ENCODE measurements at regions of chr9 and their contacts with region 1.

Region 1: GRCh38 chr9:69798744-69799143 is 21.9 kb upstream of the CFAP95 start:
- H3K4me3 ChIP-seq: no peak overlapping the region
- H3K27ac ChIP-seq: no peak overlapping the region
- H3K4me1 ChIP-seq: no peaks in the 10 kb centered on the region
- CTCF ChIP-seq: no peak

Region 2: GRCh38 chr9:69731348-69731747 is 67.4 kb before region 1 on chr9:
- CTCF ChIA-PET with region 1: no interaction called
- POLR2A ChIA-PET with region 1: no interaction called
- H3K4me3 ChIP-seq: no peak overlapping the region
- H3K27ac ChIP-seq: no peak overlapping the region
- H3K4me1 ChIP-seq: no peaks in the 10 kb centered on the region
- CTCF ChIP-seq: no peak

Region 3: DNA sequence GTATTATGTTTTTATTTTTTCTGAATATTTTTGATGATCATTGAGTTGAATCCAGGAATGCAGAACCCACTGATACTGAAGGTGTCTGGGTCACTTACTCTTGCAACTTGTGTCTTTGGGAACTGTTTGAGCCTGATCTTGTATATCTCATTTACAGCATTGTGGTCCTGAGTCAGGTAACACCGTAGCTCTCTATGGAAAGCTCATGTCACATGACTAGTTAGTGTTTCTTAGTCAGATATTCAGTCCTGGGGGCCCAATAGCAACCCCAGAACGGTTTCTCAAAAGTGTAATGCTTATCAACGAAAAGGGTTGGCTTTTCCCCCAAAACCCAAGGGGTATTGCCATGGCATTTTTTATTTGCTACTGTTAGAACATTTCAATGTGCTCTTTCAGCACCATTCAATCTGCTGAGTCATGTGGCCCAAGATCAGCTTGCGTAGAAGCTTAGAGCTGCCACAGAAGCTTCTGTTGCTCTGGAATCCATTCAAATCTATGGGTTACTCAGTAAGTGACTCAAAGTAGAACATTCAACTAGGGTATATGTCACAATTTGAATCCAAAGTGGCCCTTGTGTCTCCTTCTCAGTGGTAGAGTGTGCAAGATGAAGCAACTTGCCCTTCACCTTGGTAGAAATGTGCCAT is 26.8 kb before region 1 on chr9:
- CTCF ChIA-PET with region 1: no interaction called
- POLR2A ChIA-PET with region 1: no interaction called
- H3K4me3 ChIP-seq: no peak overlapping the region
- H3K27ac ChIP-seq: no peak overlapping the region
- H3K4me1 ChIP-seq: no peaks in the 10 kb centered on the region
- CTCF ChIP-seq: no peak

Region 4: DNA sequence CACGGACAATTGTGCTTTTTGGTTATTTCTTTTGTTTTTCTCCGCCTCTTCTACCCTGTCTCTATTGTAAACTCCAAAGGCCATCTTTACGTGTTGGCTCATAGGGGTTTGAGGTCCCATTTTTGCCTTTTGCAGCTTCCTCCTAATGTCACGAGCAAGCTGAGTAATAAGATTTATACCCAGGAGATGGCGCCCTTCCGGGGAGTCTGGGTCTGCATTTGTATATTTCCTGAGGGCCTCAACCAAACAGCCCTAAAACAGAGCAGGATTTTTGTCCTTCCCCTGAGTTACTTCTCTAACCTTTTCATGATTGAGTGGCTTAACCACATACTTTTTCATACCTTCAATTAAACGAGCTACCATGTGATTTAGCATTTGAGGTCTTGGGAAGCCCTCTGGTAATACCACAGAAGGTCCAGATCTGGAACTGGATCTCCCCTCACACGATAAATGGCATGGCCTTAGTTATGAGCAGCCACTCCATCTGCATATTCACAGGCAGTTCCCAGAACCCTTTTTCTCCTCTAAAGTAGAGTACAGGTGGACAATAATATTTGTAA is 10.6 kb after region 1 on chr9:
- CTCF ChIA-PET with region 1: interaction called, 21 read pairs
- POLR2A ChIA-PET with region 1: no interaction called
- H3K4me3 ChIP-seq: no peak overlapping the region
- H3K27ac ChIP-seq: no peak overlapping the region
- H3K4me1 ChIP-seq: no peaks in the 10 kb centered on the region
- CTCF ChIP-seq: no peak

Region 5: GRCh38 chr9:69822091-69822750 is 23.5 kb after region 1 on chr9:
- CTCF ChIA-PET with region 1: no interaction called
- POLR2A ChIA-PET with region 1: no interaction called
- H3K4me3 ChIP-seq: no peak overlapping the region
- H3K27ac ChIP-seq: no peak overlapping the region
- H3K4me1 ChIP-seq: no peaks in the 10 kb centered on the region
- CTCF ChIP-seq: no peak